Endothelial cell of umbilical vein (primary cell): ENCODE measurements at regions of chr10 and their contacts with region 1.

Region 1: DNA sequence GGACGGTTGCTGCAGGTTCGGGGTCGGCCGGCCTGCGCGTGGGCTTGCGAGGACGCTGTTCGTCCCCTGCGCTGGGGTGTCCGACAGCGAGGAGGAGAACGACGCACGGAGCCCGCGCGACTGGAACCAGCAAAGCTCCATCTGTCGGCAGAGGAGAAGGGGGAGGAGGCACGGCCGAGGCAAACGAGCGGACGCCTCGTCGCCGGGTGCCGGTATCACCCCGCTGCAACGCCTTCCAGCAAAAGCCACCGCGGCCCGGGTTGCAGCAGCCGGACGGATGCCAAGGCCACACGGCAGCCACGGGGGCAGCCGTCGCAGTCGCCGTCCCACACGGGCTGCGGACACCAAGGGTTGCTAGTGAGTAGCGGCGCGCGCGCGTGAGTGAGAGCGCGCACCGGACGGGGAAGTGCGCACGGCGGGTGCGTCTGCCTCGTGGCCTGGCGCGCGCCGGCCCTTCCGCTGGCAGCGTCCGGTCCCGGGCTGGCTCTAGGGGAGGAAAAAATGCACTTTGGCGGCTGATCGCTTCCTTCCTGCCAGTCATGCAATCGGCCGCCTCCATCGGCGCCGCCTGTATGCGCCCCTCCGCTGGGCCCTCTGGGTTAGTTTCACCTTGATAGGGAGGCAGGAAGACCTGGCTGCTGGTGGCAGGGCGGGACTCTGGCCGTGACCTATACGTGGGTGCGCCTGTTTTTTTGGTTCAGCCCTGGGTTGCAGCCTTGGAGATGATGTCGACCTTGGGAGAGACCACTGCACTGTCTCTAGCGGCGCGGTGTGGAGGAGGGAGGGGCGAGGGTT is 434 bp downstream of the STAMBPL1 start:
- DNase-seq: peak; percentile 82
- H3K4me3 ChIP-seq: peak overlapping the region; percentile 30 to 55 (median 55)
- H3K27ac ChIP-seq: peak overlapping the region; percentile 84
- H3K4me1 ChIP-seq: peaks cover 30% of the 10 kb centered on the region
- H3K27me3 ChIP-seq: no peaks in the 10 kb centered on the region
- CTCF ChIP-seq: peak; percentile 5 to 28
- POLR2A ChIP-seq: peak; percentile 83

Region 2: DNA sequence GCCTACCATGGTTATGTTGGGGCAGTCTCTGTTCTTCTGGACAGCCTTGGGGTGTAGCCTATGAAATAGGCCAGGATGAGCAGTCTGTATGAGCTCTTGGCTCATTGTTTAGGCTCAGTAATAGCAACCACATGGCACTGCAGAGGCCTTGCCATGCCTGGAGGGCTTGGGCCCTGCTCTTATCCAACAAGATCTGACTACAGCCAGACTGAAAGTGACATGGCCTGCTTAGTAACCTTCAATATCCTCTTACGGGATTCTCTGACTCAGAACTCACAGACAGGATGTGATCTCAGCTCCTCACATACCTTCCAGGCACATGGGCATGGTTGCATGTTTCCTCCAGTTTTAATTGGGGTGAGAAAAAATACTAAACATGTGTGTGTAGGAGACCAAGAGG is 727.8 kb before region 1 on chr10:
- CTCF ChIA-PET with region 1: no interaction called
- POLR2A ChIA-PET with region 1: no interaction called
- dilution Hi-C with region 1: no loop called
- intact Hi-C with region 1: loop called (anchors 10 kb)
- DNase-seq: peak; percentile 89
- H3K4me3 ChIP-seq: no peak overlapping the region
- H3K27ac ChIP-seq: peak overlapping the region; percentile 92
- H3K4me1 ChIP-seq: peaks cover 33% of the 10 kb centered on the region
- H3K27me3 ChIP-seq: no peaks in the 10 kb centered on the region
- CTCF ChIP-seq: no peak
- POLR2A ChIP-seq: peak; percentile 76

Region 3: GRCh38 chr10:88810196-88810961 is 70.1 kb before region 1 on chr10:
- CTCF ChIA-PET with region 1: no interaction called
- POLR2A ChIA-PET with region 1: no interaction called
- dilution Hi-C with region 1: no loop called
- intact Hi-C with region 1: no loop called
- DNase-seq: peak; percentile 64
- H3K4me3 ChIP-seq: no peak overlapping the region
- H3K27ac ChIP-seq: no peak overlapping the region
- H3K4me1 ChIP-seq: peaks cover 3% of the 10 kb centered on the region
- H3K27me3 ChIP-seq: no peaks in the 10 kb centered on the region
- CTCF ChIP-seq: peak; percentile 69 to 72
- POLR2A ChIP-seq: no peak

Region 4: GRCh38 chr10:88851706-88852105 is 28.8 kb before region 1 on chr10 and contains the start of gene ANKRD22:
- CTCF ChIA-PET with region 1: interaction called, 3 read pairs
- POLR2A ChIA-PET with region 1: no interaction called
- dilution Hi-C with region 1: no loop called
- intact Hi-C with region 1: loop called (anchors 1 kb)
- DNase-seq: no peak
- H3K4me3 ChIP-seq: no peak within 1 kb of the TSS
- H3K27ac ChIP-seq: no peak within 1 kb of the TSS
- H3K4me1 ChIP-seq: peaks cover 7% of the 10 kb centered on the region
- H3K27me3 ChIP-seq: peaks cover 0 to 7% of the 10 kb centered on the region in 2 experiments
- CTCF ChIP-seq: no peak
- POLR2A ChIP-seq: no peak
- total RNA-seq, gene ANKRD22: not detected in 2 replicates

Region 5: GRCh38 chr10:88908194-88908593 is 27.7 kb after region 1 on chr10:
- CTCF ChIA-PET with region 1: no interaction called
- POLR2A ChIA-PET with region 1: no interaction called
- dilution Hi-C with region 1: no loop called
- intact Hi-C with region 1: no loop called
- DNase-seq: no peak
- H3K4me3 ChIP-seq: no peak overlapping the region
- H3K27ac ChIP-seq: no peak overlapping the region
- H3K4me1 ChIP-seq: no peaks in the 10 kb centered on the region
- H3K27me3 ChIP-seq: no peaks in the 10 kb centered on the region
- CTCF ChIP-seq: no peak
- POLR2A ChIP-seq: no peak

Region 6: DNA sequence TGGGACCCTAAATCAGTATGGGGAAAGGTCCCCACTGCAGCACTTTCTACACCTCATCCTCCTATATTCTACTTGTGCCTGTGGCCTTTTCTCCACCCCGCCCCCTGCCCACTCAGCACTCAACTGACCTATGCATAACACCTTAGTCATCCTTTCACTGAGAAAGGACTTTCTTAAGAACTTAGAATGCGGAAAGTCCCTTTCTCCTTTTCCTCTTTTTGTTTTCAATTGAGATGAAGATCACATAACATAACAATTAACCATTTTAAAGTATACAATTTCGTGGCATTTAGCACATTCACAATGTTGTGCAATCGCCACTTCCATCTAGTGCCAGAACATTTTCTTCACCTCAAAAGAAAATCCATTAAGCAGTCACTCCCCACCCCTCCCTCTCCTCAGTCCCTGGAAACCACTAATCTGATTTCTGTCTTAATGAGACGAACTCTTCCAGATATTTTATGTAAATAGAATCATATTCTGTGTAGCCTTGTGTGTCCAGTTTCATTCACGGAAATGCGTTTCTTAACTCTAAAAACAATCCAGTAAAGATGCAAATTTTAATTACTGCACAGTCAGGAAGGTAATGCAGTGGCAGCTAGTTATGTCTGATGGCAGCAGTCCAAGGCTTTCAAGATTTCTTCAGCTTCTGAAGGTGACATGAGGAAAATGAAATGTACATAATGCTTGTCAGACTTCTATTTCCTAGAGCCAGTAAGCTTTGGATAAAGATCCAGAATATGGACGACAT is 151.8 kb after region 1 on chr10:
- CTCF ChIA-PET with region 1: no interaction called
- POLR2A ChIA-PET with region 1: no interaction called
- dilution Hi-C with region 1: no loop called
- intact Hi-C with region 1: no loop called
- DNase-seq: peak; percentile 73
- H3K4me3 ChIP-seq: no peak overlapping the region
- H3K27ac ChIP-seq: peak overlapping the region; percentile 28
- H3K4me1 ChIP-seq: peaks cover 19% of the 10 kb centered on the region
- H3K27me3 ChIP-seq: peaks cover 0 to 2% of the 10 kb centered on the region in 2 experiments
- CTCF ChIP-seq: no peak
- POLR2A ChIP-seq: no peak